Activated T-helper 1 cell treated with anti-CD3 and anti-CD28 coated beads, Interleukin-12 subunit alpha, Interleukin-12 subunit beta, Interleukin-2, Interleukin-4 antibody, amounts not matched to agents 30 ng/mL and 10 ng/mL and 1 ng/mL, durations not matched to agents 14 hours and 24 hours and 36 hours (primary cell): ENCODE measurements at regions of chr19 and their contacts with region 1.

Region 1: GRCh38 chr19:18322759-18323460 is at the start of gene LSM4:
- DNase-seq: peak; percentile 99
- H3K4me3 Mint-ChIP-seq: peak within 1 kb of the TSS; percentile 95
- H3K27ac Mint-ChIP-seq: peak within 1 kb of the TSS; percentile 93
- H3K4me1 Mint-ChIP-seq: peaks cover 53% of the 10 kb centered on the region
- H3K27me3 Mint-ChIP-seq: no peaks in the 10 kb centered on the region
- total RNA-seq, gene LSM4: 198 and 200 TPM in 2 replicates

Region 2: GRCh38 chr19:17824339-17824738 is 498.6 kb before region 1 on chr19:
- intact Hi-C with region 1: no loop called
- DNase-seq: no peak
- H3K4me3 Mint-ChIP-seq: no peak overlapping the region
- H3K27ac Mint-ChIP-seq: peak overlapping the region; percentile 34
- H3K4me1 Mint-ChIP-seq: no peaks in the 10 kb centered on the region
- H3K27me3 Mint-ChIP-seq: no peaks in the 10 kb centered on the region

Region 3: DNA sequence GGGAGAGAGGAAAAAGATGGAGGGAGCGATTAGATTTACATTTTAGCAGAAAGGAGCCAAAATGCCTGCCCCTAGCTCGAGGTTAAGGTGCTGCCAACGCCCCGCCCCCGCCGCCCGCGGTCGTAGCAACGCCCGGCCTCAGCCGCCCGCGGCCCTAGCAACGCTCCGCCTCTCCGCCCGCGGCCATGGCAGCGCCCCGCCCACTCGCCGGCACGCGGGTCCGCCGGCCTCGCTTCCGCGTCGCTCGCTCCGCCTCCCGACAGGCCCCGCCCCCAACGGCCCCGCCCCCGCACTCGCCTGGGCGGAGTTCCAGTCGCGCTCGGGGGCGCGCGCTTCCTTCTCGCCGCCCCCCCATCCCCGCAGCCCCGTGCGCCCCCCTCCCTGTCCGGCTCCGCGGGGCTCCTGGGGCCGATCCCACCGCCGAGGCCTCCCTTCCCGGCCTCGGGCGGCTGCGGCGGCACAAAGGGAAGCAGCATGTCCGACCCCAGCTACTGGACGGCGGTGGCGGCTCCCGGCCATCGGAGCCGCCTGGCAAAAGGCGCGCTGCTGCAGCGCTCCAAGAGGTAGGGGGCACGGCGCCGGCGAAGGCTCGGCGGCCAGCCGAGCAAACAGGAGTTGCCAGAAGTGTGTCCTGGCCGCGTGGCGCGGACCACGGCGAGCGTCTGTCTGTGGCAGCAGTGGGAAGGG is 205.1 kb before region 1 on chr19:
- intact Hi-C with region 1: no loop called
- DNase-seq: peak; percentile 95
- H3K4me3 Mint-ChIP-seq: peak overlapping the region; percentile 84
- H3K27ac Mint-ChIP-seq: peak overlapping the region; percentile 93
- H3K4me1 Mint-ChIP-seq: peaks cover 31% of the 10 kb centered on the region
- H3K27me3 Mint-ChIP-seq: no peaks in the 10 kb centered on the region

Region 4: DNA sequence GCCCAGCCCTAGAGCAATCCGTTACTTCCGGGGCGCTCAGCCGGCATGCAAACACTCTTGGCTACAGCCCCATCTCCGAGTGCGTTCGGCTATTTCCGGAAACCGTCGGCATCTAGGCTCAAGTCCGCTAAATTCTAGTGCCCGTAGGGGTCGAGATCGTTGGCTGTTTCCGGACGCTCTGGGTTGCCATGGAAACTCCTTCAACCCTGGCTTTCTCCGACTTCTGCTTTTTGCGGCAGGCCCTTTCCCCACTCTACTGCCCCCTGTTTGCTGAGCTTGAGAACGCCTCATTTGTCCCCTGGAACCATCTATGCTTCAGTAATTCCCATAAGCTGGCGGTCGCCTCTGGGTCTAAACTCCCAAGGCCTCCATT is 170.5 kb before region 1 on chr19:
- intact Hi-C with region 1: loop called (anchors 2 kb)
- DNase-seq: peak; percentile 95
- H3K4me3 Mint-ChIP-seq: peak overlapping the region; percentile 84
- H3K27ac Mint-ChIP-seq: peak overlapping the region; percentile 96
- H3K4me1 Mint-ChIP-seq: peaks cover 23% of the 10 kb centered on the region
- H3K27me3 Mint-ChIP-seq: peaks cover 3% of the 10 kb centered on the region

Region 5: GRCh38 chr19:18304458-18305310 is 18.2 kb before region 1 on chr19:
- intact Hi-C with region 1: loop called (anchors 1 kb)
- DNase-seq: peak; percentile 77
- H3K4me3 Mint-ChIP-seq: peak overlapping the region; percentile 92
- H3K27ac Mint-ChIP-seq: peak overlapping the region; percentile 98
- H3K4me1 Mint-ChIP-seq: peaks cover 40% of the 10 kb centered on the region
- H3K27me3 Mint-ChIP-seq: peaks cover 1% of the 10 kb centered on the region